ENCODE measurements at regions of chr15 and their contacts with region 1.

Region 1: DNA sequence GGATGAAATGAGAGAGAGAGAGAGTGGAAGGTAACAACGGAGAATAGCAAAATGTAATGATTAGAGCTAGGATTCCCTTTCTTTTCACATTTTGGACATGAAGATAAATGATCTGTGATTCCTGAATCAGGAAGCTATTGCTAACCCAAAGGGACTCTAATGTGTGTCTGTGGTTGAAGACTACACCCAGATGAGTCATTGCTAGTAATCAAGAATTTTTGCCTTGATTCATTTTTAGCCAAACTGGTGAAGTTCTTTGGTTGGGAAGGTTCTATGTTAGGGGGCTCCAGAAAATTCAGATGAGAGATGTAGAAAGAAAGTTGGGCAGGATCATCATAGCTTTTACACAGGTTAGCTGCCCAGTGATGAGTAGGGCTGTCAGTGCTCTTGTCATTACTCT is 116.4 kb downstream of the DUT start:
- DNase-seq: peak; percentile 38
- H3K4me3 Mint-ChIP-seq: no peak overlapping the region
- H3K27ac Mint-ChIP-seq: peak overlapping the region; percentile 18
- H3K4me1 Mint-ChIP-seq: peaks cover 11% of the 10 kb centered on the region
- H3K27me3 Mint-ChIP-seq: no peaks in the 10 kb centered on the region
- CTCF ChIP-seq: no peak

Region 2: DNA sequence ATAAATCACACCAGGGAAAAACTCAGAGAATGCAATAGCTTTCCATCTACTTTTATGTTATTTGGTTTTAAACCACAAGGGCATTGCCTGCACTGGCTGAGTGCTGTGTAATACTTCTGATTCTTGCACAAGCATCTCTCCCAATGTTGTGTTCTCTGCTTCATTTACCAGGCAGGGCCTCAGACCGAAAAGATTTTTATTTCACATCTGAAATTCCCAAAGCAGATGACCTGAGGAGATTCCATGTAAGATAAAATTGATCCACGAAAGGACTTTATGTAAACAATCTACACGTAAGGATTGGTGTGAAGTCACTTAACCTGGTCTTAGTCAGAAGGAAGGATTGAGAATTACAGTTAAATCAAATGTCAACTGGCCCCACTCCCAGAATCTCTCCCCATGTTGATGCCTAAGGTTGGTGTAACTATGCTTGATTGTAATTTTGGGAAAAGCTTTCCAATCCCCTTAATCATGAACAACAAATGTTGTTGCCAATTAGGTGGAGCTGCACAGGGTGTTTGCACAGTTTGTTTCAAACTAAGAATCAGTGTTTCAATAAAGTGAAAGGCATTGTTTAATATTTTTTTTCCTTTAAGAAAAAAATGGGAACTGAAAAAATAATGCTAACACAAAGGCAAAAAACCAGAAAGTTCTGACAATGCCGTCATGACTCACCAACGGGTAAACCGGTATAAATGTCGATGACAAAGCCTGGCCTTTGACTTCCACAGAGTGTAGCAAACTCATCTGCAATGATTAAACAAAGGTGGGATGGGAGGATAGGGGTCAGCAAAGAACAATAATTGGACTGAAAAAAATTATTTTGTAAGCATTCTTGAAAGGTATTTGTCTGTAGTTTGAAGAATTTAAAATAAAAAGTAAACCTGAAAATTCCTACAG is 12.2 kb after region 1 on chr15:
- CTCF ChIA-PET with region 1: no interaction called
- POLR2A ChIA-PET with region 1: interaction called, 13 read pairs
- intact Hi-C with region 1: no loop called
- DNase-seq: peak; percentile 35
- H3K4me3 Mint-ChIP-seq: no peak overlapping the region
- H3K27ac Mint-ChIP-seq: no peak overlapping the region
- H3K4me1 Mint-ChIP-seq: no peaks in the 10 kb centered on the region
- H3K27me3 Mint-ChIP-seq: no peaks in the 10 kb centered on the region
- CTCF ChIP-seq: no peak